ENCODE measurements at regions of chr6 and their contacts with region 1.

Region 1: DNA sequence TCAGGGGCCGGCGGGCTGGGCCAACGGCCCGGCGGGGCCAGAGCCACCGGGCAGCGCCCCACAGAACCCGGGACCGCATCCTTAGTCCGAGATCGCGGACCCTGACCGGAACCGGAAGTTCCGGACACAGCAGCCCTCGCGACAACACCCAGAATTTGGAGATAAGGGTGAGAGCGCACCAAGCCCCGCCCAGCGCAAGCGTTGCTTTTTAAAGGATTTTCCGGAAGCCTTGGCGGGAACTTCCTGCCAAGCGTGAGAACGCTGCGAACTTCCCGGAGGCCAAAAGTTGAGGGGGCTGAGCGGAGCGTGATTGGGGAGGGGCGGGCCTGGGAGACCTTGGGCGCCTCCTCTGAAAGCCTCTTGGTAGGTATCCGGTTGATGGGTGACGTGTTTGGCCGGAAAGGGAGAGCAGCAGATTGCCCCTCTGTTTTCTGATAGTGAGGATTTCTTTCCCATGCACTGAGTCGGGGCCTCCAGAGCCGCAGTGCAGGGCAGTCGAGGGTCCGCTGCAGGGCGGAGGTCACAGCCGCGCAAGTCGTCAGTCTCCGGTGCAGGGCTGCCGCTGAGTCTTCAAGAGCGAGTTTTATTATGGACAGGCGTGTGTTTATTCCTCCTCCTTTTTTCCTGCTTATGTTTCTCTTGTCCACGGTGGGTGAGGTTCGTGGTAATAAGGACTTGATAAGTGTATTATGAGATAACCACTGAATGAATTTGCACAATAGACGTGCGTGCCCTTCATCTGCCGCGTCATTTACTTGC is at the start of gene MTRF1L:
- DNase-seq: peak; percentile 81
- H3K4me3 Mint-ChIP-seq: peak within 1 kb of the TSS; percentile 98
- H3K27ac Mint-ChIP-seq: peak within 1 kb of the TSS; percentile 91
- H3K4me1 Mint-ChIP-seq: peaks cover 51% of the 10 kb centered on the region
- H3K27me3 Mint-ChIP-seq: peaks cover 10% of the 10 kb centered on the region
- total RNA-seq, gene MTRF1L: 22.7 and 23.2 TPM in 2 replicates

Region 2: GRCh38 chr6:152973916-152974315 is 28.9 kb before region 1 on chr6:
- intact Hi-C with region 1: loop called (anchors 5 kb)
- DNase-seq: no peak
- H3K4me3 Mint-ChIP-seq: peak overlapping the region; percentile 47
- H3K27ac Mint-ChIP-seq: peak overlapping the region; percentile 61
- H3K4me1 Mint-ChIP-seq: peaks cover 53% of the 10 kb centered on the region
- H3K27me3 Mint-ChIP-seq: no peaks in the 10 kb centered on the region

Region 3: GRCh38 chr6:152982768-152983636 is 19.8 kb before region 1 on chr6 and contains the start of gene FBXO5:
- intact Hi-C with region 1: loop called (anchors 1 kb)
- DNase-seq: peak; percentile 98
- H3K4me3 Mint-ChIP-seq: peak within 1 kb of the TSS; percentile 96
- H3K27ac Mint-ChIP-seq: peak within 1 kb of the TSS; percentile 100
- H3K4me1 Mint-ChIP-seq: peaks cover 53% of the 10 kb centered on the region
- H3K27me3 Mint-ChIP-seq: no peaks in the 10 kb centered on the region
- total RNA-seq, gene FBXO5: 29.4 and 33.2 TPM in 2 replicates

Region 4: GRCh38 chr6:153023977-153024708 is 21.4 kb after region 1 on chr6:
- intact Hi-C with region 1: loop called (anchors 1 kb)
- DNase-seq: peak; percentile 28
- H3K4me3 Mint-ChIP-seq: no peak overlapping the region
- H3K27ac Mint-ChIP-seq: no peak overlapping the region
- H3K4me1 Mint-ChIP-seq: peaks cover 7% of the 10 kb centered on the region
- H3K27me3 Mint-ChIP-seq: peaks cover 40% of the 10 kb centered on the region